HEK293 (cell line): ENCODE measurements at regions of chr6 and their contacts with region 1.

Region 1: DNA sequence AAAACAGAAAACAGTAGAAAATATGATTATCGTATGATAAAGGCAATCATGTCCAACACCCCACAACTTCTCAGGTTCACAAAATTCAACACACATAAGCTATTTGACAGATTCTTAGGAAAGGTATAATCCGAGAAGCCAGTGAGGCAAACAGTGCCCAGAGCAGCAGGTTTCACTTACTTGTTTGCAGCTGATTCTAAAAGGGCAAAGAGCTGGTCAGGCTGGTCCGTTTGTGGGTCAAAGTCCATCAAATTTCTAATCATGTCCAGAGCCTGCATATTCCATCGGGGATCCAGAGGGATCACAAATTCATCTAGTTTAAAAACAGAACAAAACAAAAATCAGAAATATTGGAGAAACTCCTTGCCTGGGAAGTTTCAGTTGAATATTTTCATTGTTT is 69.8 kb upstream of the LYRM2 start:
- H3K4me3 ChIP-seq: no peak overlapping the region
- H3K27ac ChIP-seq: no peak overlapping the region
- H3K4me1 ChIP-seq: no peaks in the 10 kb centered on the region
- CTCF ChIP-seq: no peak

Region 2: DNA sequence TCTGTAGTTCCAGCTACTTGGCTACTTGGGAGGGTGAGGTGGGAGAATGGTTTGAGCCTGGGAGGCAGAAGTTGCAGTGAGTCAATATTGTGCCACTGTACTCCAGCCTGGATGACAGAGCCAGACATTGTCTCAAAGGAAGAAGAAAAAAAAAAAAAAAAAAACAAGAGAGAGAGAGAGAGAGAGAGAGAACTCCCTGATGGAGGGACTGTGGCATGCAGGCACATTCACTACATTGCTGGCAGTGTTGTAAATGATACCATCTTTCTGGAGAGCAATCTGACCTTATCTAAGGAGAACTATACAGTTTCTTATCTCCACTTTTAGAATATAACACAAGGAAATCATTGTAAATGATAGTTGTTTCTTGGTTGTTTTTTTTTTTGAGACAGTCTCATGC is 26.2 kb after region 1 on chr6:
- CTCF ChIA-PET with region 1: interaction called, 3 read pairs
- POLR2A ChIA-PET with region 1: interaction called, 15 read pairs
- H3K4me3 ChIP-seq: no peak overlapping the region
- H3K27ac ChIP-seq: no peak overlapping the region
- H3K4me1 ChIP-seq: no peaks in the 10 kb centered on the region
- CTCF ChIP-seq: no peak